Sciatic nerve (tissue), 2 donors: ENCODE measurements at regions of chr5 and their contacts with region 1.

Region 1: DNA sequence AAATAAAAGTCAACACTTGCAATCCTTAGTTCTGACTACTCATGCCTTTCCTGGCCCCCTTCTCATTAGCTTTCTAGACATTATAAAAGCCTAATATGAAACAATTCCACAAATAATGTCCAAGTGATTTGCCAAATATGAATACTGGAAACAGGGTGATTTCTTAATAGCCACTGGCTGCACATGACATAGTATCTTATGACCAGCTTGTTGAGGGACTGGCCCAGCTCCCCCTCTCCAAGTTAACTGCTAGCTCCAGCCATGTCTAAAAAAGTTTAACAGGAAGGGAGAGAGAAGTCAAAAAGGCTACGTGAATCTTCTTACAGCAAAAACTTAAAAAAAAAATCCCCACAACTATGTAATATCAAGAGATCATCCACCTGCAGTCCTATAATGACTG is 1.5 kb downstream of the CERT1 start:
- DNase-seq: no peak
- ATAC-seq: no peak

Region 2: GRCh38 chr5:75331095-75332090 is 178.6 kb before region 1 on chr5:
- intact Hi-C with region 1: loop called (anchors 5 kb)
- DNase-seq: no peak
- ATAC-seq: peak; percentile 72

Region 3: DNA sequence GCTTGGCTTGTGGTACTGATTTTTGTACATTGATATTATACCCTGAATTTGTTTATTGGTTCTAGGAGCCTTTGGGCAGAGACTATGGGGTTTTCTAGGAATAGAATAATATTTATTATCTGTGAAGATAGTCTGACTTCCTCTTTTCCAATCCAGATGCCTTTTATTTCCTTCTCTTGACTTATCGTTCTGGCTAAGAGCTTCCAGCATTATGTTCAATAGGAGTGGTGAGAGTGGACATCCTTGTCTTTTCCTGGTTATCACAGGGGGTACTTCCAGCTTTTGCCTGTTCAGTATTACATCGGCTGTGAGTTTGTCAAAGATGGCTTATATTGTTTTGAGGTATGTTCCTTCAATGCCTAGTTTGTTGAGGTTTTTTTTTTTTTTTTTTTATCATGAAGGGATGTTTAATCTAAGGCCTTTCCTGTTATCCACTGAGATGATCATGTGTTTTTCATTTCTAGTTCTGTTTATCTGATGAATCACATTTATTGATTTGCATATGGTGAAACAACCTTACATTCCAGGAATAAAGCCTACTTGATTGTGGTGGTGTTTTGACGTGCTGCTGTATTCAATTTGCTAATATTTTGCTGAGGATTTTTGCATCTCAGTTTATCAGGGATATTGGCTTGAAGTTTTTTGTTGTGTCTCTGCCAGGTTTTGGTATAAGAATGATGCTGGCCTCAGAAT is 76.0 kb before region 1 on chr5:
- intact Hi-C with region 1: no loop called
- DNase-seq: no peak
- ATAC-seq: no peak